Activated CD4-positive, alpha-beta memory T cell treated with anti-CD3 and anti-CD28 coated beads for 36 hours (primary cell): ENCODE measurements at regions of chr17 and their contacts with region 1.

Region 1: GRCh38 chr17:40531051-40531991 is 29.9 kb upstream of the TNS4 start:
- DNase-seq: peak; percentile 94
- H3K4me3 Mint-ChIP-seq: peak overlapping the region; percentile 75
- H3K27ac Mint-ChIP-seq: peak overlapping the region; percentile 94
- H3K4me1 Mint-ChIP-seq: peaks cover 67% of the 10 kb centered on the region
- H3K27me3 Mint-ChIP-seq: no peaks in the 10 kb centered on the region

Region 2: DNA sequence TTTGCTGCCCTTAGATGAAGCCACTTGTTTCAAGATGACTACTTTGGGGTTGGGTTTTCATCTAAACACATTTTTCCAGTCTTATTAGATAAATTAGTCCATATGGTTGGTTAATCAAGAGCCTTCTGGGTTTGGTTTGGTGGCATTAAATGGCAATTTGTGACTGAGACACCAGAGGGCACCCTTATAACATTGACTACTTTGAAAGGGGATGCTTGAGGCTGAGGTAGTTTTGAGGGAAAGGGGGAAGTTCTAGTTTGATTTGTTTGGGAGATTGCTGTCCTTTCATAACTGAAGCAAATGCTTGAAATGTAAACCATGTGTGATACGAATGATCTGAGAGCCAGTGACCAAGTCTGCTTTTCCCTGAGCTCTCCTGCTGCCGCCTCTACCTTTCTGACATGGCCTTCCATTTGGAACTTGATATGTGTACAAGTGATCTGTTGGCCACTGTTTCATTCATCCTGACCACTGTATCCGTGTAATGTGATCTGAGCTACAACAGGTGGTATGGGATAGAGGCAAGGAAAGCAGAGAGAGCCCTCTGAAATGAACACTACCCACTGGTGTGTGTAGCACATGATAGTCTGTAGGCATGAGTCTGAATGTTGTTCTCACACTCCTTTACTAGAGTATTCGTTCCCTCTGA is 228.2 kb before region 1 on chr17:
- CTCF ChIA-PET with region 1: interaction called, 17 read pairs
- POLR2A ChIA-PET with region 1: no interaction called
- intact Hi-C with region 1: no loop called
- DNase-seq: peak; percentile 46
- H3K4me3 Mint-ChIP-seq: no peak overlapping the region
- H3K27ac Mint-ChIP-seq: peak overlapping the region; percentile 36
- H3K4me1 Mint-ChIP-seq: peaks cover 15% of the 10 kb centered on the region
- H3K27me3 Mint-ChIP-seq: no peaks in the 10 kb centered on the region

Region 3: GRCh38 chr17:40399185-40399584 is 132.1 kb before region 1 on chr17:
- CTCF ChIA-PET with region 1: interaction called, 64 read pairs
- POLR2A ChIA-PET with region 1: no interaction called
- intact Hi-C with region 1: loop called (anchors 1 kb)
- DNase-seq: no peak
- H3K4me3 Mint-ChIP-seq: no peak overlapping the region
- H3K27ac Mint-ChIP-seq: peak overlapping the region; percentile 54
- H3K4me1 Mint-ChIP-seq: peaks cover 18% of the 10 kb centered on the region
- H3K27me3 Mint-ChIP-seq: no peaks in the 10 kb centered on the region

Region 4: DNA sequence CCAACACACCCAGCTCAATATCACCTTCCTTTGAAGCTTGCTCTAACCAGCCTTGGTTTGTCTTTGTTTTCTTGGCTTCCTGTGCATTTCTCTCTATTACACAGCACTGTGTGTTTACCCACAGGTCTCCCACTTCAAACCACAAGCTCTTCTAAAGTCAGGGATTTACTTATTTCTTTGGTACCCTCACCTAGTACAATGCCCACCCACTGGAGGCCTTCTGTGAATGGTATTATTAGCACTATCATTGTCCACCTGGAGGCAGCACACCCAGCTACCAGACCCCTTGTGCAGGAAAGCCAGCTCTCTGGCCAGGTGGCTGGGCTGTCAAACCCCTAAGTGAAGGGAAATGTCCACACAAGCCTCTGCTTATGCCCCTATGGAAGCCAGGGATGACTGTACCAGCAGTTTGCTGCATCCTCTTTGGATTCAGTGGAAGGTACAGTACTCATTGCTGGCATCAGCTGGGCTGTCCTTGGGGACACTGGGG is 104.3 kb before region 1 on chr17:
- CTCF ChIA-PET with region 1: interaction called, 41 read pairs
- POLR2A ChIA-PET with region 1: no interaction called
- intact Hi-C with region 1: no loop called
- DNase-seq: peak; percentile 30
- H3K4me3 Mint-ChIP-seq: no peak overlapping the region
- H3K27ac Mint-ChIP-seq: peak overlapping the region; percentile 2
- H3K4me1 Mint-ChIP-seq: peaks cover 28% of the 10 kb centered on the region
- H3K27me3 Mint-ChIP-seq: no peaks in the 10 kb centered on the region

Region 5: DNA sequence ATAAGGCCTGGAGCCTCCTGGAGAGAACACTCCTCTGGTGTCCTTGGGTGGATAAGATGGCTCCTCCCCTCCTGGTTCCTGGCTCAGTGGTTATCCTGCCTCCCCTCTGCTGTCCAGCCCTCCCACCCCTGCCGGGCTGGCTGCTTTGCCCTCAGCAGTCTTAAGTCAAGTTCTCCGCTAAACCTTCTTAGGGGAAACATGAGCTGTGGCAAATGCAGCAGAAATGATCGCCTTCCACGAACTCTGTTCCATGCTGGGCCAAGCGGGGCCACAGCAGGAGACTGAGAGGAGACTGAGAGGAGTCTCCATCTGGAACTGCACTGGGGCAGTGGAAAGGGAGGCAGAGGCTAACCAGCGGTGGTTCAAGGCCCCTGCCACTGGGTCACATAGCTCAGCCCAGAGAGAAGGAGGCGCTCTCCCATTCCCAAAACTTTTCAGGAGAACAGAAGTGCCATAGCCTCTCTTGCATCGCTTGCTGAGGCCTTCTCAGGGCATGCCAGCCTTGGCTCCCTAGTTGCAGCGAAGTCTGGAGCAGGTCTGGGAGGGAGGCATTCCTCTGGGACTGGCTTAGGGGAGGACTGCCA is 56.8 kb before region 1 on chr17:
- CTCF ChIA-PET with region 1: interaction called, 93 read pairs
- POLR2A ChIA-PET with region 1: interaction called, 36 read pairs
- intact Hi-C with region 1: no loop called
- DNase-seq: no peak
- H3K4me3 Mint-ChIP-seq: no peak overlapping the region
- H3K27ac Mint-ChIP-seq: peak overlapping the region; percentile 24
- H3K4me1 Mint-ChIP-seq: peaks cover 19% of the 10 kb centered on the region
- H3K27me3 Mint-ChIP-seq: no peaks in the 10 kb centered on the region

Region 6: GRCh38 chr17:40542558-40543411 is 11.5 kb after region 1 on chr17:
- CTCF ChIA-PET with region 1: interaction called, 392 read pairs
- POLR2A ChIA-PET with region 1: interaction called, 10 read pairs
- intact Hi-C with region 1: loop called (anchors 1 kb)
- DNase-seq: peak; percentile 76
- H3K4me3 Mint-ChIP-seq: peak overlapping the region; percentile 56
- H3K27ac Mint-ChIP-seq: peak overlapping the region; percentile 90
- H3K4me1 Mint-ChIP-seq: peaks cover 78% of the 10 kb centered on the region
- H3K27me3 Mint-ChIP-seq: no peaks in the 10 kb centered on the region

Region 7: DNA sequence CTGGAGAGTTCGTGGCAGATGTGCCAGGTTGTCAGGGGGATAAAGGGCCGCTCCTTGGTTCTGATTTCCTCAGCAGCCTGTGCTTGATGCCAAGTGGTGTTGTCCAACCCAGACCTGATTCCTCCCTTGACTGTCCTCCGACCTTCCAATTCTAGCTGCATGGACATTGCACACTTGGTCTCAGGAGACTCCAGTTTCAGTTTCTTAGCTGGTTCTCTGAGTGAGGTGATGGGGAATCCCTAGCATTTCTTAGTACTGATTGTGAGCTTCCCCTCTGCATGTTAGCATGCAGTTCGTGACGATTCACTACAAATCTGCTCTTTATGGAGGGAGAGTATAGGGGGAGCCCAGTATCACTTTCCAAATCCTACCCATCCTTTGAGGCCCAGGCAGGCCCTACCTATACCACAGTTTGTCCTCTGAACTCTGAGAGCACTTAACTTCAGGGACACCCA is 46.3 kb after region 1 on chr17:
- CTCF ChIA-PET with region 1: no interaction called
- POLR2A ChIA-PET with region 1: no interaction called
- intact Hi-C with region 1: no loop called
- DNase-seq: peak; percentile 39
- H3K4me3 Mint-ChIP-seq: no peak overlapping the region
- H3K27ac Mint-ChIP-seq: peak overlapping the region; percentile 15
- H3K4me1 Mint-ChIP-seq: peaks cover 60% of the 10 kb centered on the region
- H3K27me3 Mint-ChIP-seq: no peaks in the 10 kb centered on the region

Region 8: DNA sequence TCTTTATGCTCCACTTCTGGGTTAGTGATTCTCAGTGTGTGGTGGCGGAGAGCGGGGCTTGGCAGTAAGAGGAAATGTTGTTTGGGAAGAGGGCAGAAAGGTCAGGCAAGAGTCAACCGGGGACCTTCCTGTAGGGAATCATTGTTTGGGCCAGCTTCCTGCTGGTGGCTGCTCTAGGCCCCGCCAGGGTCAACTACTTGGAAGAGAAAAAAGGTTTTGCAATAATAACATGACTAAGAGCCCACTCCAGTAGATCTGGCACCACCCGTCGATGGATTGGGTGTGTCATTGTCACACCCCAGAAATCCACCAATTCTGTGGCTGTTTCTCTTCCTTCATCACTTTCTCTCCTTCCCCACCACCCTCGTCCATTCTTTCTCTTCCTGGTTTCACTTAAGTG is 176.4 kb after region 1 on chr17:
- CTCF ChIA-PET with region 1: no interaction called
- POLR2A ChIA-PET with region 1: no interaction called
- intact Hi-C with region 1: no loop called
- DNase-seq: no peak
- H3K4me3 Mint-ChIP-seq: no peak overlapping the region
- H3K27ac Mint-ChIP-seq: no peak overlapping the region
- H3K4me1 Mint-ChIP-seq: no peaks in the 10 kb centered on the region
- H3K27me3 Mint-ChIP-seq: peaks cover 16% of the 10 kb centered on the region